GM18951 (cell line): ENCODE measurements at regions of chr13 and their contacts with region 1.

Region 1: GRCh38 chr13:73417015-73417623 is 358.3 kb downstream of the KLF5 start:
- POLR2A ChIP-seq: no peak

Region 2: DNA sequence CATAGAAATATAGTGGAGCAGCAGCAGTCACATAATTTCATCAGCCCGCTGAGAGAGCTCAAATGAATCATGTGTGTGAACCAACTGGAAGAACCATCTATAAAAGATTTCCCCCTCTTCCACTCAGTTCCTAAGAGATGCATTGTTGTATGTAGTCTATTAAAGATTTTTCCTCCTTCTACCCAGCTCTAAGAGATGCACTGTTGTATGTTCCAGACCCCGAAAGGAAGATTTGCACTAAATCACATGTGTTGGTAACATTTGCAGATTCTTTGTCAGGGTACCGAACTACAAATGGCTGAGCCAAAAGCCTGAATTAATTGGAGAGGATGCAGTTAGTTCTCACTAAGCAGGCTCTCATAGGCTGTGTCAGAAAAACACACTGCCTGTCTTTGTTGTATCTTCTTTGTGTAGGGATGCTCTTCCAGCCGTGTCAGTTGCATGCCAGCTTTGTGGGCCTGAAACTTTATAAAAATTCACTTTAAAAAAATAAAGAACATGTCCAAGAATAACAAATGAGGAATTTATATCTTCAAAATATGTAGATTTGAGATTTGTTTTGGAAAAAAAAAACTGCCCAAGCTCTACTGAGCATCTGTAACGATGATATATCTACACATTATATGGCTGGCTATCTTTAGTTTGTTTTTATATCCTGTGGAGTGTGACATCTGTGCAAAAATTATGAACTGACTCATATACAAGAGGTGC is 912.8 kb before region 1 on chr13:
- in situ Hi-C with region 1: no loop called
- POLR2A ChIP-seq: no peak

Region 3: GRCh38 chr13:72839831-72840426 is 577.2 kb before region 1 on chr13:
- in situ Hi-C with region 1: loop called (anchors 25 kb)
- POLR2A ChIP-seq: no peak

Region 4: DNA sequence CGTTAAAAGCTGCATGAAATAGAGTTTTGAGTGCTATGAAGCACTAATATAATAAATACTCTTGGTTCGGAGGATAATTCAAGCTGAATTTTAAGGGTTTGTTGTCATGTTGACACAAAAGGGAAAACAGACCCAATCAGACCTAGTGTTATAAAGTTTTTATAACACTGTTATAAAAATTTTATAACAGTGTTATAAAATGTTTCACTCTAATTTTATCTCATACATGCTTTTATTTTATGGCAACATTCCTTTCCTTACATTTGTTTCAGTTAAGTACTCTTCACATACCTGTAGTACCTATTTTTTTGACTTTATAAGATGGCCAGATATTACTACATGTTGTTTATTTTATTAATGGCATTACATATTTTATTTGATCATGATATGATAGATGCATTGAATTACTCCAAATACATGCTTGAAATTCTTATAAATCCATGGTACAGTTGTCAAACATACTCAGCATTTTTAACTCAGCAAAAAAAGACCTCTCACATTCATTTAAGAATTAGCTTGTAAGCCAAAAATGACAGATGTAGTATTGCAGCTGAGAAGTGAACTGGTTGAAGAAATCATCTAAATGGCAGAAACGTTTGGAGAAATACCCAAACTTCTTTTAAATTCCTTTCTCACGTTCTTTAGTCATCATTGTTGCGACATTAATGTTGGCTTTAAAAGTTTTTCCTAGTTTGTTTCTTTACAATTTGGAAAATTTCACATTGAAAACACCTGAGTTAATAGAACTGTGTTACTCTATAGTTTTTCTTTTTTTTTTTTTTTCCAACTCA is 530.7 kb before region 1 on chr13:
- in situ Hi-C with region 1: no loop called
- POLR2A ChIP-seq: no peak

Region 5: DNA sequence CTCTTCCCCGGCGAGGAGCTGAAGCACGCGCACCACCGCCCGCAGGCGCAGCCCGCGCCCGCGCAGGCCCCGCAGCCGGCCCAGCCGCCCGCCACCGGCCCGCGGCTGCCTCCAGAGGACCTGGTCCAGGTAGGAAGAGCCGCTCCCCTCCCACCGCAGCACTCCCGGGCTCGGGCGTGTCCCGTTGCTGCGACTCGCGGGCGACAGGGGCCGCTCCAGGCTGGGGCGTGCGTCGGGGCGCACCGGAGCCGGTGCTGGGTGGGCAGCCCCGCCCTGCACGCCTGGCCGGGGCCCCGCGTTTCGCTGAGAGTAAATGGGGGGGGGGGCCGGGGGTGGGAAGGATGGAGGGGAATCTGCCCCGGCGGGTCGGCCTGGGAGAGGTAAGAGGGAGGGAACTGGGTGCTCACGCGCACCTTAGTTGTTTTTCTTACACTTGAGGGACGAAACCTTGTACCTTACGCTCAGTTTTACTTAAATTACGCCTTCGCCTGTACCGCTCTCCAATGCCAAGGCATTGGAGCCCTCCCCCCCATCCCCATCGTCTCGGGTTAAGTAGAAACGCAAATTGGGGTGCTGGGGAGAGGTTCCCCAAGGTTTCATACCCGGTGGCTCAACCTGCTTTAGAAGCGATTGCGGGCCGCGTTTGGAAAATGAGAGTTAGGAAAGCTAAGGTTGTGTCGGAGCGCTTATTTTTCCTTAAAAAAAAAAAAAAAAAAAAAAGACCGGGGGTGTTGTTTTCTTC is 357.5 kb before region 1 on chr13:
- in situ Hi-C with region 1: no loop called
- POLR2A ChIP-seq: no peak

Region 6: DNA sequence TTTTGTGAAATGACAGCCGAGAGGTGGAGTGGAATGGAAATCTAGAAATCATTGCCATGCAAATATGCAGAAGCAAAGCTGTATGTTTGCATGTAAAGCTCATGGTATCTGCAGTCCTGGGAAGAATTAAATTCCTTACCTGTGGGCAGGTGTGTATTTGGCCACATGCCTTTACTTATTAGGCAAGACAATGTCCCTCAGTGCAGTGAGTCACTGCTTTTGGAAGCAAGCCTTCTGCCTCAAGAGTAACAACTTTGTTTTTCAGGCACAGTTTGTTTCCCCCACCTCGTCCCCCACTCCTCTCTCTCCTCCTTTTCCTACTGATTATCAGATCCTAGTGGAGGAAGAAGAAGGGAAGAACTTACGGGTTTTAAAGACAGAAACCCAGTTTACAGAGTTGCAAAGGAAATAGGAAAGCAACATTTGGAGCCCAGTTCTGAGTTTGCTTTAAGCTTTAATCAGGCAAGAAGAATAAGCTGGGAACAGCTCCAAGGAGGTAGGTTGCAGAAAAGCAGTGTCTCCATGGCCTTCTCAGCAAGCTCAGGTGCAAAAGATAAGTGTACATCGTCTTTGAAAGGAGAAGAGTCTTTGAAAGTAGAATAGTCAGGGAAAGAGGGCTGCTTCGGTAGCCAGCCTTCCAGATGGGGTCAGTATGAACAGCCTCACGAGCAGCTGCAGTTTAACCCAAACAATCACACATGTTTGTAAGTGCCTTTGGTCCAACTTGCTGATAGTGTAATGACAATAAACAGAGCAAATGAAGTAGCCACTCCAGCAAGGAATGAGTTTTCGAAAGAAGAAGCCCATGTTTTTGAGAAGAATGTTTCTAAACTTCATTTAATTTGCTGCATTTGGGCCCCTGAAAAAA is 168.2 kb before region 1 on chr13:
- in situ Hi-C with region 1: no loop called
- POLR2A ChIP-seq: no peak